CD8-positive, alpha-beta T cell (primary cell): ENCODE measurements at regions of chr6 and their contacts with region 1.

Region 1: GRCh38 chr6:89080542-89081422 is at the start of gene PNRC1:
- DNase-seq: peak; percentile 100
- ATAC-seq: peak; percentile 77
- H3K4me3 ChIP-seq: peak within 1 kb of the TSS; percentile 83 to 99
- H3K4me3 Mint-ChIP-seq: peak within 1 kb of the TSS; percentile 96
- H3K27ac ChIP-seq: peak within 1 kb of the TSS; percentile 94 to 100
- H3K27ac Mint-ChIP-seq: peak within 1 kb of the TSS; percentile 98
- H3K4me1 ChIP-seq: peaks cover 37% of the 10 kb centered on the region
- H3K4me1 Mint-ChIP-seq: peaks cover 38% of the 10 kb centered on the region
- H3K27me3 ChIP-seq: no peaks in the 10 kb centered on the region
- H3K27me3 Mint-ChIP-seq: no peaks in the 10 kb centered on the region
- CTCF ChIP-seq: no peak
- total RNA-seq, gene PNRC1: 1,160 to 1,236 TPM

Region 2: DNA sequence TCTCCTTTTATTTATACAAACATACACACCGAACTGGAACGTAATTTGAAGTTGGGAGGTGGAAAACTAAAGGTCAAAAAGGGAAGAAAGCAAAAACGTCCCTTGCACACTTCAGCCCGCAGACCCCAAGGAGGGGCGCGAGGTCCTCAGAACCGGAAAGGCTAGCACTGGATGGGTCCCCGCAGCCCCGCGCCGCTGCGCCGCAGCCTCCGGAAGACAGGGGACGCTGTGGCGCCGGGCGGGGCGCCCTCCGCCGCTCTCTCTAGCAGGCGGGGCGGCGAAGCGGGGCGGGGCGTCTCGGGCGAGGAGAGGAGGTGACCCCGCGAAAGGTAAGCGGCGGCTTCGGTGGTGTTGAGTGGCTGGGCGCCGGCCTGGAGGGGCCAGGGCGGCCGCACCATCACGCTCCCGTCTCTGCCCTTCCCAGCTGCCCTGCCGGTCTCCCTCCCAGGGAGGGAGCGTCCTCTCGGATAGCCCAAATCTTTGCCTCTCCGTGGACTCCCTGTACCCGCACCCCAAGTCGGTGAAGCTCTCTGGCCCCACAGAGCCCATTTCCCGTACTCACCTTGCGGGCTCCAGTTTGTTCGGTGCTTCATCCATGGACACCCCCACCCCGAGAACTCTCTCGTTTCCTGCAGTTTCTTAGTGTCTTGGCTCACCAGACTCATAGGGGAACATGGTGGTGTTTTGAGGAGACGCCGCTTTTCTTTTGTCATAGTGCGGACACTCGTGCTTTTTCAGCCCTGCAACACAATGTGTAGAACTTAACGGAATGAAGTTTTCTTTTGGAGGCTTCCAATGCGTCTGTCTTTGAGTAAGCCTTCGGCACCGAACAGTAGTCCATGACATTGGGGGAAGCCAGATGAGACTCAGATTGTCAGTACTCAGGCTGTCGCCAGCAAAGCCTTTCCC is 1758.2 kb before region 1 on chr6 and contains the start of gene SMIM8:
- CTCF ChIA-PET with region 1: no interaction called
- POLR2A ChIA-PET with region 1: no interaction called
- intact Hi-C with region 1: loop called in 1 of 2 experiments (anchors 5 kb)
- DNase-seq: peak; percentile 66 to 90 (median 86)
- ATAC-seq: peak; percentile 99
- H3K4me3 ChIP-seq: peak within 1 kb of the TSS; percentile 72 to 86
- H3K4me3 Mint-ChIP-seq: peak within 1 kb of the TSS; percentile 94
- H3K27ac ChIP-seq: peak within 1 kb of the TSS; percentile 52 to 58
- H3K27ac Mint-ChIP-seq: peak within 1 kb of the TSS; percentile 90
- H3K4me1 ChIP-seq: peaks cover 6% of the 10 kb centered on the region
- H3K4me1 Mint-ChIP-seq: peaks cover 25% of the 10 kb centered on the region
- H3K27me3 ChIP-seq: no peaks in the 10 kb centered on the region
- H3K27me3 Mint-ChIP-seq: no peaks in the 10 kb centered on the region
- CTCF ChIP-seq: peak; percentile 99
- total RNA-seq, gene SMIM8: 4.2 TPM

Region 3: DNA sequence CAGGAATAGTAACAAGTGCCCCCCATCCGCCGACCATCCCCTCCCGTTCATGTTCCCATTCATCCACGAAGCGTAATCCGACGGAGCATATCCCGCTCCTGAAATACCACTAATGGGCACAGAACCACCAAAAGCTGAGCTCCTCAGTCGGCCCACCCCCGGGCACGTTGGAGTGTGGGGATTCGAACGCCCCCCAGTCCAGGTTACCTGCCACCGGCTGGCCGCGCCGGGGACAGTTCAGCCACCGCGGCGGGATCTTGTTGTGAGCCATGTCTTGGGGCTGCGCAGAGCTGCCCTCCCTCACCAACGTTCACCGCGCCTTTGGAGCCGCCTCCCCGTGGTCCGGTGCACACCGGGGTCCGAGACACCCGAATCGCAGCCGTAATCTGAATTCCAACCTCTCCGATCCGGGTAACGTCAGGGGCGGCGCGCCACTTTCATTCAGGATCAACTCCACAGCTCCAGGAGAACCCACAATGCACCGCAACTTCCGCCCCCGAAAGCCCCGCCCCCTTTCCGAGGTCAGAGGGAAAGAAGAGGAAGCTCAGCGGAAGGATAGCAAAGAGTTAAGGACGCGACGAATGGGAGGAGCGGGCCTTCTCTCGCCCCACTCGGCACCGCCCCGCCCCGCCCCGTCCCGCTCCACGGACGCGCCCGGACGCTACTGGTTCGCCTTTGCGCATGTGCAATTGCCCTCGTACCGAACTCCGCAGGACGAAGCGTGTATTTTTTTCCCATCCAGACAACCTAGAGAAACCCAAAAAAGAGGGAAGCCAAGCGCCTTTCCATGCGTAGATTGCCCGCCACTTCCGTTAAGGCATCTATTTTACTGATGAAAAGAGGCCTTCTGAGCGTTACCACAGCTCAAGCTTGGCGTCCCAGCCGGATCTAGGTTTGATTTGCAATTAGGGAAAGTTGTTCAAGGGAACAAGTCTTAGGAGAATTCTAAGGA is 117.4 kb before region 1 on chr6 and contains the start of gene RNGTT:
- CTCF ChIA-PET with region 1: interaction called, 7 read pairs
- POLR2A ChIA-PET with region 1: interaction called, 45 read pairs
- intact Hi-C with region 1: loop called (anchors 1 kb)
- DNase-seq: peak; percentile 95 to 98 (median 98)
- ATAC-seq: peak; percentile 99
- H3K4me3 ChIP-seq: peak within 1 kb of the TSS; percentile 90 to 92
- H3K4me3 Mint-ChIP-seq: peak within 1 kb of the TSS; percentile 98
- H3K27ac ChIP-seq: peak within 1 kb of the TSS; percentile 58 to 73
- H3K27ac Mint-ChIP-seq: peak within 1 kb of the TSS; percentile 94
- H3K4me1 ChIP-seq: peaks cover 20% of the 10 kb centered on the region
- H3K4me1 Mint-ChIP-seq: peaks cover 51% of the 10 kb centered on the region
- H3K27me3 ChIP-seq: no peaks in the 10 kb centered on the region
- H3K27me3 Mint-ChIP-seq: no peaks in the 10 kb centered on the region
- CTCF ChIP-seq: no peak
- total RNA-seq, gene RNGTT: 10.1 to 10.3 TPM

Region 4: GRCh38 chr6:89117211-89118108 is 36.7 kb after region 1 on chr6 and contains the start of gene SRSF12:
- CTCF ChIA-PET with region 1: interaction called, 3 read pairs
- POLR2A ChIA-PET with region 1: interaction called, 6 read pairs
- intact Hi-C with region 1: loop called in 1 of 2 experiments (anchors 2 kb)
- DNase-seq: peak in 8 of 9 experiments; percentile 14 to 64 (median 37)
- ATAC-seq: peak; percentile 84
- H3K4me3 ChIP-seq: peak within 1 kb of the TSS; percentile 38 to 44
- H3K4me3 Mint-ChIP-seq: peak within 1 kb of the TSS; percentile 85
- H3K27ac ChIP-seq: no peak within 1 kb of the TSS
- H3K27ac Mint-ChIP-seq: peak within 1 kb of the TSS; percentile 9
- H3K4me1 ChIP-seq: peaks cover 4% of the 10 kb centered on the region
- H3K4me1 Mint-ChIP-seq: peaks cover 9% of the 10 kb centered on the region
- H3K27me3 ChIP-seq: peaks cover 0 to 3% of the 10 kb centered on the region in 2 experiments
- H3K27me3 Mint-ChIP-seq: peaks cover 3% of the 10 kb centered on the region
- CTCF ChIP-seq: no peak
- total RNA-seq, gene SRSF12: not detected

Region 5: GRCh38 chr6:89352278-89353117 is 271.7 kb after region 1 on chr6 and contains the start of gene UBE2J1:
- CTCF ChIA-PET with region 1: interaction called, 4 read pairs
- POLR2A ChIA-PET with region 1: interaction called, 45 read pairs
- intact Hi-C with region 1: loop called (anchors 2 to 5 kb)
- DNase-seq: peak; percentile 48 to 87 (median 71)
- ATAC-seq: peak; percentile 81
- H3K4me3 ChIP-seq: peak within 1 kb of the TSS; percentile 58 to 67
- H3K4me3 Mint-ChIP-seq: peak within 1 kb of the TSS; percentile 97
- H3K27ac ChIP-seq: peak within 1 kb of the TSS; percentile 74 to 77
- H3K27ac Mint-ChIP-seq: peak within 1 kb of the TSS; percentile 97
- H3K4me1 ChIP-seq: peaks cover 42% of the 10 kb centered on the region
- H3K4me1 Mint-ChIP-seq: peaks cover 69% of the 10 kb centered on the region
- H3K27me3 ChIP-seq: no peaks in the 10 kb centered on the region
- H3K27me3 Mint-ChIP-seq: no peaks in the 10 kb centered on the region
- CTCF ChIP-seq: no peak
- total RNA-seq, gene UBE2J1: 34.1 to 37.5 TPM

Region 6: GRCh38 chr6:89412071-89413005 is 331.6 kb after region 1 on chr6 and contains the start of gene RRAGD:
- CTCF ChIA-PET with region 1: no interaction called
- POLR2A ChIA-PET with region 1: interaction called, 5 read pairs
- intact Hi-C with region 1: loop called in 1 of 2 experiments (anchors 2 kb)
- DNase-seq: peak; percentile 11 to 77 (median 52)
- ATAC-seq: peak; percentile 73
- H3K4me3 ChIP-seq: peak within 1 kb of the TSS; percentile 62 to 72
- H3K4me3 Mint-ChIP-seq: peak within 1 kb of the TSS; percentile 94
- H3K27ac ChIP-seq: peak within 1 kb of the TSS in 1 of 2 experiments; percentile 29
- H3K27ac Mint-ChIP-seq: peak within 1 kb of the TSS; percentile 77
- H3K4me1 ChIP-seq: peaks cover 14% of the 10 kb centered on the region
- H3K4me1 Mint-ChIP-seq: peaks cover 20% of the 10 kb centered on the region
- H3K27me3 ChIP-seq: peaks cover 0 to 5% of the 10 kb centered on the region in 2 experiments
- H3K27me3 Mint-ChIP-seq: peaks cover 13% of the 10 kb centered on the region
- CTCF ChIP-seq: no peak
- total RNA-seq, gene RRAGD: 5.6 to 9.3 TPM

Region 7: DNA sequence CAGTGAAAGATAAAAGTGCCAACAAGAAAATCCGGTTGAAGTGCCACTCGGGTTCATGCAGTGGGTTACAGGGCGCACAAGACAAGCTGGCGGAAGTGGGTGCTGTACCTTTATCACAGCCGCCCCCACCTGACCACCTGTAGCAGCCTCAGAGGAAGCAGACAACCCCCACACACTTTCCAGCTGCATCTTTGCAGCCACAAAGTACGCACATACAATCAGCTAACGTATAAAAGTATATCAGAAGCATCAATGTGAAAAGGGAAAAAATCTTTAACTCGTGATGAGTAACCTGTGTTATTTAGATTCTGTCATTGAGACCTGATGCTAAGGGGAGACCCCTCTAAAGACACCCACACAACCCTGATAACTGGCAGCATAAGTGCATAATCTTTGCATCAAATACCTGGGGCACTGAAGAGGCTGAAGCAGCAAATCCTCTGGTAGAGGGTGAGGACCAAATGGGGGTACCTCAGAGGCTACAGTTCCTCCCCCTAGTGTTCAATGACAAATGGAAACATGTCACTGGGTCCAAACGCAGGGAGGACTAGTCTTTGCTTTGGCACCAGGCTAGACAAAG is 1193.8 kb after region 1 on chr6:
- CTCF ChIA-PET with region 1: no interaction called
- POLR2A ChIA-PET with region 1: no interaction called
- intact Hi-C with region 1: no loop called
- DNase-seq: peak; percentile 80 to 98 (median 86)
- ATAC-seq: peak; percentile 86
- H3K4me3 ChIP-seq: peak overlapping the region in 1 of 2 experiments; percentile 10
- H3K4me3 Mint-ChIP-seq: peak overlapping the region; percentile 74
- H3K27ac ChIP-seq: peak overlapping the region; percentile 67 to 90
- H3K27ac Mint-ChIP-seq: peak overlapping the region; percentile 98
- H3K4me1 ChIP-seq: peaks cover 87% of the 10 kb centered on the region
- H3K4me1 Mint-ChIP-seq: peaks cover 90% of the 10 kb centered on the region
- H3K27me3 ChIP-seq: no peaks in the 10 kb centered on the region
- H3K27me3 Mint-ChIP-seq: no peaks in the 10 kb centered on the region
- CTCF ChIP-seq: peak; percentile 47